Sigmoid colon (tissue), 7 donors: ENCODE measurements at regions of chr16 and their contacts with region 1.

Region 1: GRCh38 chr16:8173111-8173644 is 417.1 kb downstream of the TMEM114 start:
- DNase-seq: no peak
- H3K4me3 ChIP-seq: no peak overlapping the region
- H3K27ac ChIP-seq: no peak overlapping the region
- H3K4me1 ChIP-seq: no peaks in the 10 kb centered on the region
- H3K27me3 ChIP-seq: no peaks in the 10 kb centered on the region
- CTCF ChIP-seq: peak; percentile 19 to 69 (median 53)
- EP300 ChIP-seq: no peak
- POLR2A ChIP-seq: no peak

Region 2: DNA sequence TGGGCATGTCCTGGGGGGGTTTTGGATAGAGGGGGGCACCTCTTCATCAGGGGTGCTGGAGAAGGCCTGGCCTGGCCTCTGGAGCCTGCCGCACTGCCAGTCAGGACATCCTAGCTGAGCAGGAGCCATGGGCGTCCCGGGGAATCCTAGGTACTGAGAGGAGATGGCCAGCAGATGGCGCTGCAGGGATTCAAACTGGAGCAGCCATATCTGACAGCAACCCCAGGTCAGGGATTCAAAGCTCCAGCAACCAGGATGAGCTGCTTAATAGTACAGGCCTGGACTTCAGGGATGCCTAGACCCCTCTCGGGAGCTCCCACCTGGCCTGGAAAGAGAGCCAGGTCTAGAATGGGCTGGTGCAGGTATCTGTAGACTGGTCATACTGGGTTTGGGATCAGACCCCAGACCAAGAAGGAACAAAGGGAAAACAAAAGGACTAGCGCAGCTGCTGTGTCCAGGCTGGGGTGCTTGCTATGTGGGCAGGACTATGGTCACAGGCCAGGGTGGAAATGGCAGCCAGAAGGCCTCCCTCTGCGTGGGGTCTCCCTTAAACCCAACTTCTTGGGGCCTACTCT is 1147.5 kb before region 1 on chr16:
- intact Hi-C with region 1: loop called (anchors 10 kb)
- DNase-seq: peak; percentile 68
- H3K4me3 ChIP-seq: no peak overlapping the region
- H3K27ac ChIP-seq: no peak overlapping the region
- H3K4me1 ChIP-seq: no peaks in the 10 kb centered on the region
- H3K27me3 ChIP-seq: no peaks in the 10 kb centered on the region
- CTCF ChIP-seq: peak in 2 of 4 experiments; percentile 30 to 44
- EP300 ChIP-seq: no peak
- POLR2A ChIP-seq: no peak

Region 3: GRCh38 chr16:7268182-7268581 is 905.0 kb before region 1 on chr16:
- intact Hi-C with region 1: loop called (anchors 10 kb)
- DNase-seq: no peak
- H3K4me3 ChIP-seq: no peak overlapping the region
- H3K27ac ChIP-seq: no peak overlapping the region
- H3K4me1 ChIP-seq: no peaks in the 10 kb centered on the region
- H3K27me3 ChIP-seq: no peaks in the 10 kb centered on the region
- CTCF ChIP-seq: peak in 3 of 4 experiments; percentile 15 to 46 (median 27)
- EP300 ChIP-seq: no peak
- POLR2A ChIP-seq: no peak

Region 4: DNA sequence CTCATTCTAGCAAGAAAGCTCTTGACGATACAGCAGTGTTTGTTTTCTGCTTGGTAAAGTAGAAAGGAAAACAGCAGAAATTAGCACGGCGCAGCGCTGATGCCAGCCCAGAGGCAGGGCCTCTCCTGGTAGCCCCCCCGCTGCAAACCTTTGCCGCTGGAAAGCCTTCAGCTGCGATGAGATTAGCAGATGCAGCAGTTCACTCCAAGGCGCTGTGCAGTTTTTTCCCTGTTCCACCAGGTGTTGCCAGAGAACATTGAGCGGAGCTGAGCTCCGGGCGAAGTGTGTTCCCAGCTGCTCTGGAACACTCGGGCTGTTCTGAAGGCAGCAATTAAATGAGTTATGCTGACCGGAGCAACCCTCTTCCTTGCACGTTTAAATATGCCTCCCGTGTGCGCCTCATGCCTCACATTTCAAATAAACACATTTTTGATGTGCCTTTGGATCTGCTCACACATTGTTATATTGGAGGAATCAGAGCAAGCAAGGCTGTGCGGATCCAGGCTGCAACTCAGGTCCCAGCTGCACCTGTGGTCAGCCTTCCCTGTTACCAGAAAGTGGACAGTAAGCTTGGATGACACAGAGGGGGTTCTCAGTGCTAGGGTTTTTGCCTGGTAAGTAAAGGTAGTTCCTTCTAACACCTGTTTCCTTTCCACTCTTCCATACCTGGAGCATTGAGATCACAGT is 767.9 kb before region 1 on chr16:
- intact Hi-C with region 1: loop called (anchors 10 kb)
- DNase-seq: no peak
- H3K4me3 ChIP-seq: no peak overlapping the region
- H3K27ac ChIP-seq: no peak overlapping the region
- H3K4me1 ChIP-seq: no peaks in the 10 kb centered on the region
- H3K27me3 ChIP-seq: no peaks in the 10 kb centered on the region
- CTCF ChIP-seq: no peak
- EP300 ChIP-seq: no peak
- POLR2A ChIP-seq: no peak